ENCODE measurements at regions of chr3 and their contacts with region 1.

Region 1: DNA sequence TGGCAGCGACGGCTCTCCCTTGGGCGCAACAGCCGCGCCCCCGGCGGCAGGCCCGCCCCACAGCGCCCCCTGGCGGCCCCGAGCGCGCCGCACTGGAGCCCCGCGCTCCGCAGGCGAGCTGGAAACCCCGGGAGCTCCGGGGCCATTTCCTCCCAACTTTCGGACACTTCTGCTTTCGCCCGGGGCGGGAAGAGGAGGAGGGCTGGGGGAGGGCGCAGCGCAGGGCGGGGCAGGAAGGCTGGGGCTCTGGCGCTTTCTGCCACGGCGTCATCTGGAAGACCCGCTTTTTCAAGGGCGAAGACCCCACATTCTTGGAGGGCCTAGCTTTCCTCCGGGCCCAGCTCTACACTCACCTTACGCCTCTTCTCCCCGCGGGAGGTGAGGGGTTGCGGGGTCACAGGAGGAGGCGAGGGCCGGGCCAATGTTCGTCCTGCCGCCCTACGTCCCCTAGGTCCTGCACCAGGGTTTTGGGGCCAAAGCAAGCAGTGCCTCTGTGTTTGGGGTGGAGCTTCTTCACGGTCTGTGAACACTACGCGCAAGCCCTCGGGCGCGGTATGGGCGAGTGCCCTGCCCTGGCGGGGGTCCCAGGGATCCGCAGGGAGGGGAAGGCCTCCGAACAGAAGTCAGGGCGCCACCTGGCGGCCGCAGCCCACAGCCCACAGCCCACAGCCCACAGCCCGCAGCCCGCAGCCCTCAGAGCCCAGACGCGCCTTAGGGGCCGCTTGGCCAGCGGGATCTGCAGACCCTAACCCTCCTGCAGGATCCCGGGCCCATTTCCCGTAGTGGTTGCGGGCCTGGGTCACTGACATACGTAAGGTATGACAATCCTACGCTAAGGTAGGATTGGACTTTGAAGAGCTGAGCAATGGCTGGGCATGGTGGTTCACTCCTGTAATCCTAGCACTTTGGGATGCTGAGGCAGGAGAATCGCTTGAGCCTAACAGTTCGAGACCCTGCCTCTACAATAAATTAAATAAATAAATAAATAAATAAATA is 31.1 kb downstream of the FOXL2 start:
- DNase-seq: peak; percentile 76
- ATAC-seq: peak; percentile 94
- H3K4me3 ChIP-seq: peak overlapping the region; percentile 82 to 89 (median 83)
- H3K27ac ChIP-seq: peak overlapping the region; percentile 83
- H3K4me1 ChIP-seq: peaks cover 15% of the 10 kb centered on the region
- H3K27me3 ChIP-seq: no peaks in the 10 kb centered on the region; a peak in 2 of 5 replicates
- CTCF ChIP-seq: peak; percentile 98
- EP300 ChIP-seq: no peak
- POLR2A ChIP-seq: peak in 1 of 2 experiments; percentile 41; a peak in 1 of 4 replicates
- RAD21 ChIP-seq: peak; percentile 95

Region 2: GRCh38 chr3:138694287-138695007 is 221.4 kb before region 1 on chr3:
- CTCF ChIA-PET with region 1: interaction called, 27 read pairs
- POLR2A ChIA-PET with region 1: interaction called, 13 read pairs
- in situ Hi-C with region 1: loop called (anchors 5 kb)
- intact Hi-C with region 1: loop called (anchors 1 kb)
- DNase-seq: no peak
- ATAC-seq: no peak
- H3K4me3 ChIP-seq: no peak overlapping the region
- H3K27ac ChIP-seq: no peak overlapping the region
- H3K4me1 ChIP-seq: peaks cover 3% of the 10 kb centered on the region
- H3K27me3 ChIP-seq: no peaks in the 10 kb centered on the region
- CTCF ChIP-seq: no peak
- EP300 ChIP-seq: no peak
- POLR2A ChIP-seq: no peak
- RAD21 ChIP-seq: no peak

Region 3: DNA sequence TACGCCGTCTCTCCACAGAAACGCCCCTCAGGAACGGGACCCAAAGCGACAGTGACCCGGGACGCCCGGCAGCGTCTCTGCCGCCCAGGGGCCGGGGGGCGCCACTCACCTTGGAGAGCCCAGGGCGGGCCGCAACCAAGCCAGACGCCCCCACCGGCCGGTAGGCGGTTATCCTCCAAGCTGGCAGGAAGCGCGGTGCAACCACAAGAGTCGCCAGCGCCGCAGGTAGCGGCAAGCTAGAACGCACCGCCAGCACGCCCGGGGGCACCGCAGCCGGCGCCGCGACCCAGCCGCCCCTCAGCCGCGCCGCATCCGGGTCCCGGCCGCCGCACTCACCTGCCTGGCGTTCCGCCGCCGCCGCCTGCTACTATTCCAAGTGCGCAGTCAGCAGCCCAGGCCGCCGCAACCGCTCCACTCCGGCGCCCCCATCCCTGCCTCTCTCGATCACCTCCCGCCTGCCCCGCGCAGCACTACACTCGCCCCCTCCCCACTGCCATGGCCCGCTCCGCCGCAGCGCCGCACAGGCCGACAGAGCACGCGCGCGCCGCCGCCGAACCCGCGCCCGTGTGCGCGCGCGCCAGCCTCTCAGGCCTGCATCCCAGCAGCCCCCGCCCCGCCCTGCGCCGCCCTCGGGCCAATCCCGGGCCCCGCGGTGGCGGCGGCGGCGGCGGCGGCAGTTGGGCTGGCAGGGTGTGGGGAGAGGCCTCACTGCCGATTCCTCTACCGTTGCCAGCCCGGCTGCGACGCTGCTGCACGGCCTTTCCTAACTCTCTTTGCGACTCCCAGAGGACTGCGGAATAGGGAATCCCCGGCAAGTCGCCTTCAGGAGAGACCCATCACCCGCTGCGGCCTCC is 81.2 kb before region 1 on chr3 and contains the start of gene PIK3CB:
- CTCF ChIA-PET with region 1: interaction called, 39 read pairs
- POLR2A ChIA-PET with region 1: interaction called, 27 read pairs
- in situ Hi-C with region 1: loop called (anchors 5 kb)
- intact Hi-C with region 1: loop called (anchors 1 kb)
- DNase-seq: peak; percentile 72
- ATAC-seq: peak; percentile 95
- H3K4me3 ChIP-seq: peak within 1 kb of the TSS; percentile 80 to 94 (median 86)
- H3K27ac ChIP-seq: peak within 1 kb of the TSS; percentile 95
- H3K4me1 ChIP-seq: peaks cover 39% of the 10 kb centered on the region
- H3K27me3 ChIP-seq: no peaks in the 10 kb centered on the region; a peak in 1 of 5 replicates
- CTCF ChIP-seq: peak; percentile 72
- EP300 ChIP-seq: no peak
- POLR2A ChIP-seq: peak; percentile 91 to 92
- RAD21 ChIP-seq: peak; percentile 84
- total RNA-seq, gene PIK3CB: 6.6 and 18.6 TPM in 2 replicates

Region 4: DNA sequence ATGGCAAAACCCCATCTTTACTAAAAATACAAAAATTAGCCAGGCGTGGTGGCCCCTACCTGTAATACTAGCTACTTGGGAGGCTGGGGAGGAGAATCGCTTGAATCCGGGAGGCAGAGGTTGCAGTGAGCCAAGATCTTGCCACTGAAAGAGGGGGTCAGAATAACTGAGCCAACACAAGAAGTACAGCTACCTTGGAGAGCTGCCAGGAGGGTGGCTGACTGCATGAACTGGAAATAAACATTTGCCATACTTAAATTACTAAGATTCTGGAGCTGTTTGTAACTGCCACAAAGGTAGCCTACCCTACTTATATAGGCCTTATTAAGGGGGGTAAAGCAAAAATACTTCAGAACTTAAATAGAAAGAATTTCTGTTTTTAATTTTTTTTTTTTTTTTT is 65.7 kb before region 1 on chr3:
- CTCF ChIA-PET with region 1: no interaction called
- POLR2A ChIA-PET with region 1: interaction called, 15 read pairs
- in situ Hi-C with region 1: no loop called
- intact Hi-C with region 1: no loop called
- DNase-seq: no peak
- ATAC-seq: no peak
- H3K4me3 ChIP-seq: no peak overlapping the region
- H3K27ac ChIP-seq: peak overlapping the region; percentile 78
- H3K4me1 ChIP-seq: peaks cover 65% of the 10 kb centered on the region
- H3K27me3 ChIP-seq: no peaks in the 10 kb centered on the region
- CTCF ChIP-seq: no peak
- EP300 ChIP-seq: no peak
- POLR2A ChIP-seq: no peak
- RAD21 ChIP-seq: no peak